HEK293 (cell line): ENCODE measurements at regions of chr1 and their contacts with region 1.

Region 1: GRCh38 chr1:205354259-205354904 is 2.3 kb downstream of the KLHDC8A start:
- H3K4me3 ChIP-seq: no peak overlapping the region
- H3K27ac ChIP-seq: no peak overlapping the region
- H3K4me1 ChIP-seq: no peaks in the 10 kb centered on the region; the same call in 1 of the 2 replicates
- CTCF ChIP-seq: no peak; the same call in 1 of the 2 replicates

Region 2: DNA sequence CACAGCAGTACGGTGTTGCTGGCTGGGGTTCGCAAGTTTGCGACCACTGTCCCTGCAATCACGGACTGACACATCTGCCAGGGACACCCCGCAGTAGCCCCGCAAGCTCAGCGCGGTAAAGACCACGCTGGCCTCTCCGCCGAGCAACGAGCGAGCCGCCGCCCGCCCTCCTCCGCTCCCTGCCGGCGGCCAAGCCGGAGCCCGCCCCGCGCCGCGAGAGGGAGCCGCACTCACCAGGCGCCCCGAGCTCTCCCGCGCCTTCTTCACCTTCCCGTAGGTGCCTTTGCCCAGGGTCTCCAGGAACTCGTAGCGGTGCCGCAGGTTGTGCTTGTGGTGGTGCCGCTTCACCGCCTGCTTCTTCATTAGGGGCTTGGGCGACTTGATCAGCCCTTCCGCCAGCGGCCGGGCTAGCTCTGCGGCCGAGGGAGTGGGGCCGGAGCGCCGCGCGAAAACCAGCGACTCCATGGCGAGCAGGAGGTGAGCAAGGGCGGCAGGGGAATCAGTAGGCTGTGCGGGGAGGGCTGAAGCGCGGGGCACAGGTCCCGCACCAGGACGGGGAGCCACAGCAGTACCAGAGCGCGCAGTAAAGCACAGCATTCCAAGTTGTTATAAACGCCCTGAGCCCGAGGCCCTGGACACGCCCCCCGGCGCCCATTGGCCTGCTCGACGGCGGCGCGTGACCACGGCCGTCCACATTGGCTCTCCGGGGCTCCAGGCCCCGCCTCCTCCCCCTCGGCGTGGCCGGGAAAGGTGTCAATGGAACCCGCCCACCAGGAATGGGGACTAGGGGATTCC is 33.0 kb before region 1 on chr1 and contains the start of gene NUAK2:
- CTCF ChIA-PET with region 1: interaction called, 30 read pairs
- POLR2A ChIA-PET with region 1: no interaction called
- H3K4me3 ChIP-seq: peak within 1 kb of the TSS; percentile 74
- H3K27ac ChIP-seq: peak within 1 kb of the TSS; percentile 18; the same call in 1 of the 2 replicates
- H3K4me1 ChIP-seq: peaks cover 10% of the 10 kb centered on the region
- CTCF ChIP-seq: peak; percentile 85

Region 3: DNA sequence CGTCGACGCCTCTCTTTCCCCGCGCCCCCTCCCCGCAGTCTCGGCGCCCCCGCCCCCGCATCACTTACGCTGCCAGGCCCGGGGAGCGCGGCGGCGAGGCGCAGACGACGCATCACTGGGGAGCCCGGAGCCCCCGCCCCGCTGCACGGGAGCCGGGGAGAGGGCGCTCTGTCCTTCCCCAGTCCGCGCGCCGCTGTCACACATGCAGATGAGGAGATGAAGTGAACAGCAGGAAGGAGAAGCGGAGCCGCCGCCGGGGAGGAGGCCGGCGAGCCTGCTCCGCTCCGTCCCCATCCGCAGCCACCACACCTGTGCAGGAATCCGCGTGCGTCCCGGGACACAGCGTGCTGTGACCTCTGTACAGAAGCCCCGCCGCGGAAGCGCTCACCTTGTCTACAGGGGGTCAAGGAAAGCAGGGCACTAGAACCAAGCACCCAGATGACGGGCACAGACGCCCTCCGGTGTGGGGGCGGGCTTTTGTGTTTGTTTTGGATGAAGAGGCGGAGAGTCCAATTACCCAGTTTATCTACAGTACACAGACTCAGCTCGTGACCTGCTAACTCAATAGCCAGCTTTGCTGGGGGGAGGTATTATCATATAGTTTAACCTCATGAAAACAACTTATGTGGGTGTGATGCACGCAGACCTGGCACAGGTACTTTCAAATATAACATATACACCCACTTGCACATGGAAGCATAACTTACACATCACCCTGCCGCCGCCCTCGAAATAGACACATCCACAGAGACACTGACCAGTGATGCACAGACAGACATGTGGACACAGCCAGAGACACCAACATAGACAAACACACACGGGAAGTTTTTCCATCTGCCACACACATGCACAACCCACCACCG is 10.1 kb before region 1 on chr1:
- CTCF ChIA-PET with region 1: interaction called, 80 read pairs
- POLR2A ChIA-PET with region 1: interaction called, 3 read pairs
- H3K4me3 ChIP-seq: peak overlapping the region; percentile 45
- H3K27ac ChIP-seq: no peak overlapping the region; the same call in 1 of the 2 replicates
- H3K4me1 ChIP-seq: peaks cover 5% of the 10 kb centered on the region; the same call in 1 of the 2 replicates
- CTCF ChIP-seq: peak; percentile 46; the same call in 1 of the 2 replicates

Region 4: GRCh38 chr1:205375835-205376545 is 21.6 kb after region 1 on chr1:
- CTCF ChIA-PET with region 1: interaction called, 19 read pairs
- POLR2A ChIA-PET with region 1: no interaction called
- H3K4me3 ChIP-seq: no peak overlapping the region
- H3K27ac ChIP-seq: no peak overlapping the region; the same call in 1 of the 2 replicates
- H3K4me1 ChIP-seq: peaks cover 35% of the 10 kb centered on the region
- CTCF ChIP-seq: no peak

Region 5: GRCh38 chr1:205396967-205397616 is 42.7 kb after region 1 on chr1:
- CTCF ChIA-PET with region 1: interaction called, 40 read pairs
- POLR2A ChIA-PET with region 1: no interaction called
- H3K4me3 ChIP-seq: no peak overlapping the region
- H3K27ac ChIP-seq: no peak overlapping the region
- H3K4me1 ChIP-seq: no peaks in the 10 kb centered on the region
- CTCF ChIP-seq: peak; percentile 81

Region 6: DNA sequence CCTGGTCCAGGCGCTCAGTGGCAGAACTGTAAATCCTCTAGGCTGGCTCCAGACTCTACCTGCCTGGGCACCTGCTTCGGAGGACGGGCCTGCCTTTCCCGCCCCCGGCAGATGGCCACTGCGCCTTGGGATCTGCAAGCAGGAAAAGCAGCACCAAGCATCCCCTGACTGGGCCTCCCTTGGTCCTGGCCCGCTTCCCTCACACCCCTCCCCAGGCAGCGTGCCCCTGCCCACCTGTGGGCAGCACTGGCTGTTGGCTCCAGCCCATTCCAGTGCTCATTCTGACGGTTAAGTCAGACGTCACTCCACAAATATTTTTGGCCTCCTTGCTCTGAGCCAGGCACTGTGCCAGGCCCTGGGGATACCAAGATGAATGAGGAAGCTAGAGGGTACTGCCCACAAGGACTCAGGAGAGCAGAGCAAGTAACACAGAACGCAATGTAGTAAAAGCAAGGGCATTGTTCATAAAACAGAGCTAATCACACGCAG is 123.4 kb after region 1 on chr1:
- CTCF ChIA-PET with region 1: interaction called, 11 read pairs
- POLR2A ChIA-PET with region 1: no interaction called
- H3K4me3 ChIP-seq: no peak overlapping the region
- H3K27ac ChIP-seq: no peak overlapping the region
- H3K4me1 ChIP-seq: no peaks in the 10 kb centered on the region
- CTCF ChIP-seq: no peak